ENCODE measurements at regions of chr20 and their contacts with region 1.

Region 1: DNA sequence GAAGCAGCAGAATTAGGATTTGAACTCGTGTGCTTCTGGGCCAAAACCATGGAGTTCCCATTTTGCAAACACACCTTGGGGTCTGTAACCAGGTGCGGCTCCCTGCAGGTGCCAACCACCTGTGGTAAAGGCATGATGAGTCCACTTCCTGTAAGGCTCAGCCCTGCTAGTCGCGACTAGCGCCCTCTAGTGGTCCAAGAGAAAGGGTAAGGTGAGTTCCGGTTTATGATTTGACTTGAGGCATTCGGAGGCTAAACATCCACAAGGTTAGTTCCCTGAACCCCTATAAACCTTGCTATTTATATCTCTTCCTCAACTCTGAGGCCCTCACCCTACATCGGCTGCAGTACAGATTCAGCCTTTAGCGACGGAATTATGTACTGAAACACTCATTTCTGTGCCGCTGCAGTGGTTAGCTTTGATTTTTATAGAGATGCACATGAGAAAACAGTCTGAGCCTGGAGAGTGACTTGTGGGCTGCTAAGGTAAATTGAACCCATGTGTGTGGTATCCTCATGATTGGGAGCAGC is 173.4 kb downstream of the PLCB1 start:
- DNase-seq: peak; percentile 67
- ATAC-seq: peak; percentile 99
- H3K4me3 ChIP-seq: no peak overlapping the region
- H3K27ac ChIP-seq: no peak overlapping the region
- H3K4me1 ChIP-seq: peaks cover 0 to 3% of the 10 kb centered on the region in 2 experiments; a peak in 1 of 4 replicates
- H3K27me3 ChIP-seq: no peaks in the 10 kb centered on the region
- CTCF ChIP-seq: peak; percentile 34 to 91 (median 88); a peak in 5 of 6 replicates
- POLR2A ChIP-seq: no peak
- RAD21 ChIP-seq: peak; percentile 52

Region 2: GRCh38 chr20:8043687-8044282 is 261.7 kb before region 1 on chr20:
- CTCF ChIA-PET with region 1: interaction called, 3 read pairs
- POLR2A ChIA-PET with region 1: no interaction called
- RAD21 ChIA-PET with region 1: interaction called in 1 of 2 experiments, 5 read pairs
- intact Hi-C with region 1: loop called (anchors 5 kb)
- DNase-seq: peak; percentile 60
- ATAC-seq: peak; percentile 91
- H3K4me3 ChIP-seq: no peak overlapping the region
- H3K27ac ChIP-seq: no peak overlapping the region
- H3K4me1 ChIP-seq: no peaks in the 10 kb centered on the region; a peak in 1 of 4 replicates
- H3K27me3 ChIP-seq: no peaks in the 10 kb centered on the region
- CTCF ChIP-seq: peak; percentile 46 to 61 (median 55); a peak in 5 of 6 replicates
- POLR2A ChIP-seq: no peak
- RAD21 ChIP-seq: peak; percentile 69

Region 3: GRCh38 chr20:8131598-8132483 is 173.7 kb before region 1 on chr20 and contains the start of gene PLCB1:
- CTCF ChIA-PET with region 1: no interaction called
- POLR2A ChIA-PET with region 1: no interaction called
- RAD21 ChIA-PET with region 1: no interaction called
- intact Hi-C with region 1: loop called (anchors 2 kb)
- DNase-seq: peak; percentile 13
- ATAC-seq: peak; percentile 99
- H3K4me3 ChIP-seq: peak within 1 kb of the TSS; percentile 33 to 53
- H3K27ac ChIP-seq: no peak within 1 kb of the TSS
- H3K4me1 ChIP-seq: peaks cover 0 to 5% of the 10 kb centered on the region in 2 experiments; a peak in 2 of 4 replicates
- H3K27me3 ChIP-seq: no peaks in the 10 kb centered on the region
- CTCF ChIP-seq: peak; percentile 45 to 78 (median 59); a peak in 4 of 6 replicates
- POLR2A ChIP-seq: no peak
- RAD21 ChIP-seq: peak; percentile 75
- total RNA-seq, gene PLCB1: 15.8 TPM